OCI-LY7 (cell line): ENCODE measurements at regions of chr10 and their contacts with region 1.

Region 1: GRCh38 chr10:68600041-68600778 is 40.1 kb downstream of the TET1 start:
- DNase-seq: peak; percentile 84
- H3K4me3 ChIP-seq: peak overlapping the region; percentile 67
- H3K27ac ChIP-seq: peak overlapping the region; percentile 67
- H3K4me1 ChIP-seq: peaks cover 26% of the 10 kb centered on the region
- CTCF ChIP-seq: no peak

Region 2: DNA sequence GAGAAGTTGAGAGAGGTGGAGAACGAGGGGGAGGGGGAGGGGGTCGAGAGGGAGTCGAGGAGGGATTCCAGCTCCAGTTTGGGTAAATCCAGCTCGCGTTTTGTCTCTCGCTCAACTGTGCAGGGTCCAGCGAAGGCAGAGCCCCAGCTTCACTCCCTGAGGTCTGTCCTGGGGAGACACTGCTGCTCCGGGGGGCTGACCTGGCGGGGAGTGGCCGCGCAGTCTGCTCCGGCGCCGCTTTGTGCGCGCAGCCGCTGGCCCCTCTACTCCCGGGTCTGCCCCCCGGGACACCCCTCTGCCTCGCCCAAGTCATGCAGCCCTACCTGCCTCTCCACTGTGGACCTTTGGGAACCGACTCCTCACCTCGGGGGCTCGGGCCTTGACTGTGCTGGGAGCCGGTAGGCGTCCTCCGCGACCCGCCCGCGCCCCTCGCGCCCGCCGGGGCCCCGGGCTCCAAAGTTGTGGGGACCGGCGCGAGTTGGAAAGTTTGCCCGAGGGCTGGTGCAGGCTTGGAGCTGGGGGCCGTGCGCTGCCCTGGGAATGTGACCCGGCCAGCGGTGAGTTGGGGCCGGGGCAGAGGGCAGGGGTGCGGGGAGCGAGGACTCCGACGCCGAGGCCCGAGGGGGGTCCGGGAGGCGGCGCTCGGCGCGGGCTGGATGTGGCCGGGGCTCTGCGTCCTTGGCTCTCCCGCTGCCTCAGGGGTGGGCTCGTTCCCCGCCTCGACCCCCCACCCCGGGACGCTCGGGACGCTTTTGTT is 39.8 kb before region 1 on chr10 and contains the start of gene TET1:
- CTCF ChIA-PET with region 1: no interaction called
- POLR2A ChIA-PET with region 1: interaction called, 3 read pairs
- intact Hi-C with region 1: loop called (anchors 1 kb)
- DNase-seq: peak; percentile 37
- H3K4me3 ChIP-seq: peak within 1 kb of the TSS; percentile 41
- H3K27ac ChIP-seq: no peak within 1 kb of the TSS
- H3K4me1 ChIP-seq: peaks cover 13% of the 10 kb centered on the region
- CTCF ChIP-seq: no peak
- total RNA-seq, gene TET1: 3.0 and 3.3 TPM in 2 replicates